ENCODE measurements at regions of chr22 and their contacts with region 1.

Region 1: DNA sequence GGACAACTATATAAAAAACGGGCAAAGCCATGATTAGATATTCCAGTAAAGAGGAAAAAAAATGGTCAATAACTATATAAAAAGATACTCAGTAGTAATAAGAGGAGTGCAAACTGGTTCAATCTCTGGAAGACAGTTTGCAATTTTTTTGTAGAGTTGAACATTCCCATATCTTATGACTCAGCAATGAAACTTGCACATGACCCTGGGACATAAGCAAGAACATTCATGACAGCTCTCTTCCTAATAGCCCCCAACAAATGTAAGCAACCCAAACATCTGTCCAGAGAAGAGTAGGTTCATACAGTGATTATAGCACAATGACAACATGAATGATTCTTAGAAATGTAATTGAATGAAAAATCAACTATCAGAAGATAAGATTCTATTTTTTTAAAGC is 21.8 kb upstream of the CSF2RB start:
- DNase-seq: no peak
- H3K4me3 ChIP-seq: no peak overlapping the region
- CTCF ChIP-seq: no peak

Region 2: DNA sequence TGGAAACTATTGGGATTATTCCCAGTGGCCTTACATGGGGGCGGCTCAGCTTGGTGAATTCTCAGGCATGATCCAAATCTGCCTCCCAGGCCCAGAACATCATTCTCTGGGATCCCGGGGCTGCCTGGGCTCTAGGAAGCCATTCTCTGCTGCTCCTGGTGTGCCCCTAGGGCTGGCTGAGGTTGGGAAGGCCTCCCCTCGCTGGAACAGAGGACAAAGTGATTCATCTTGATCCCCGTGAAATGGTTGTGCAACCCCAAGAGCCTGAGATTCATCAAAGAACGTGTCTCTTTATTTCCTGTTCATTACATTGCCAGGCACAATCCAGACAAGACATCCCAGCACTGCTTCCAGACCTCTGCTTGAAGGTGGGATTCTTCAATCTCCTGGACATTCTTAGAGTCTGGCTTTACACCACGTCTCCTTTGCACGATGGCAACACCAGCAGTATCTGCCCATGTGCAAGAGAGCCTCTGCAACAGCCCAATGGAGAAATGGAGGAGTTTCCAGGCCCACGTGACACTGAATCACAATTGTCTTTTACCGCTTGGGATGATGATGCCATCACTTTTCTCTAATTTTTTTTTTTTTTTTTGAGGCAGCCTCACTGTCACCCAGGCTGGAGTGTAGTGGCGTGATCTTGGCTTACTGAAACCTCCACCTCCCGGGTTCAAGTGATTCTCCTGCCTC is 75.3 kb after region 1 on chr22:
- in situ Hi-C with region 1: loop called (anchors 5 kb)
- DNase-seq: no peak
- H3K4me3 ChIP-seq: no peak overlapping the region
- CTCF ChIP-seq: no peak

Region 3: GRCh38 chr22:36977947-36978660 is 86.5 kb after region 1 on chr22:
- in situ Hi-C with region 1: no loop called
- DNase-seq: peak; percentile 68
- H3K4me3 ChIP-seq: peak overlapping the region; percentile 41
- CTCF ChIP-seq: peak; percentile 88

Region 4: GRCh38 chr22:38540701-38541100 is 1649.1 kb after region 1 on chr22:
- in situ Hi-C with region 1: no loop called
- DNase-seq: no peak
- H3K4me3 ChIP-seq: no peak overlapping the region
- CTCF ChIP-seq: no peak

Measured in astrocyte of the cerebellum (primary cell).